Posterior vena cava (tissue), 2 donors: ENCODE measurements at regions of chr7 and their contacts with region 1.

Region 1: DNA sequence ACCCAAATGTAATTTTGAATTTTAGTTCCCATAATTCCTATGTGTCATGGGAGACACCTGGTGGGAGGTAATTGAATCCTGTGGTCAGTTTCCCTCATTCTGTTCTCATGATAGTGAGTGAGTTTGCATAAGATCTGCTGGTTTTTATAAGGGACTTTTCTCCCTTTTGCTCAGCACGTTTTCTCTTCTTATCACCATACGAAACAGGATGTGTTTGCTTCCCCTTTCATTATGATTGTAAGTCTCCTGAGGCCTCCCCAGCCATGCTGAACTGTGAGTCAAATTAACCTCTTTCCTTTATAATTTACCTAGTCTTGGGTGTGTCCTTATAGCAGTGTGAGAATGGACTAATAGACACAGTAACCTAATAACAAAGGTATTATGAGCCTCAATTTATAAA is 36.1 kb upstream of the ZNF736 start:
- DNase-seq: no peak

Region 2: DNA sequence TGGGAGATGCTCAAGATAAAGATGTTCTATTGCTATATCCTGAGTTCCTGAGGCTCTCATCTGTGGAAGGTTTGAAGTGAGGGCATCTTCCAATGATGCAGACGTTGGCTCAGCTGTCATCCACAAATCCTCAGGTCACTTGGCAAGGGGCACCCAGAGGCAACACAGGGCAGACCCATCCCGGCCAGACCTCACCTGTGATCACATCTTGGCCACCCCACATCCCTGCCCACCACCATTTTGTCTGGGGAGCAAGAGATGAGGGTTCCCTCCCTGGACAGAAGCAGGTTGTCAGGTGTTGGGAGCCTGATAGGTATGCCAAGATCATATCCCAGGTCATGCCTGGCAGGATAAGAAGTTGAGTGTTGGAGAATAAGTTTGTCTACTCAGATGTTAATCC is 1197.2 kb before region 1 on chr7:
- intact Hi-C with region 1: loop called in 1 of 2 experiments (anchors 10 kb)
- DNase-seq: no peak

Region 3: GRCh38 chr7:64366921-64367320 is 89.3 kb after region 1 on chr7:
- intact Hi-C with region 1: no loop called
- DNase-seq: no peak